Left colon (tissue), 2 donors: ENCODE measurements at regions of chr2 and their contacts with region 1.

Region 1: DNA sequence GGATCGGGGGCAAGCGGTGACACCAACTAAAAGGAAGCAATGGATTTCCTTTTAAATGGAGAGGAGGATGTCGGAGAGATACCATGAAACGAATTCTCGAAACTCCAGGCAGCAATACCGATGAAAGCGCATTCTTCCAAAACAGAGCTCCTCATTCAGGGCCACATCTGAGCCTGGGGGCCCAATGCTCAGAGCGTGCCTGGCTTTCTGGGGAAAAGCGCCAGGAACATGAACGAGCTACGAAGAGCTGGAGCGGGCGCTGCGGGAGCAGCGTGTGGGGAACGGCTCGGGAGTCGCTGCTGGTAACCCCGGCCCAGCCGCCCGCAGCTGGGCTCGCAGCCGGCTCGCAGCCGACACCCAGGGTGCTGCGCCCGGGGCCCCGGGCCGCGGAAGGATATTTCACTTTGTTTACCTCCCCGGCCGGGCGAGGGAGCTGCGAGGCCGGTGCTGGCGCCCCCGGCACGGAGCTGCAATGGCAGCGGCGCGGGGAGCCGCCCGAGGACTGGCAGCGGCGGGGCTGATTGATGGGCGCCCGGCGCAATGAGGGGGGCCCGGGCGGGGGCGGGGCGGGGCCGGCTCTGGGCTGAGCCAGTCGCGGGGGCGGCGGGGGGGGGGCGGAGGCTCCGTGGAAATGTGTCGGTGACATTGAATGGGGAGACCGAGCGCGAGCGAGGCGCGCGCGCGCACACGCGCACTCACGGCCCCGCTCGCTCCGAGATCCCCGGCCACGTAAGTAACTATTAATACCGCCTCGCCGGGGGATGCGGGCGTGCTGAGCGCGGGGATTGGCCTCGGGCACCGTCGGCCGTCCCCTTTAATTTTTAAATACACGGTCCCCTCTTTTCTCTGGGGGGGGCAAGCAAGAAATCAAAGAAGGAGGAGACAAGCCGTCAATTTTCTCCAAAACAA is at the start of gene TRIB2:
- DNase-seq: peak; percentile 67 to 82
- ATAC-seq: peak; percentile 80
- total RNA-seq, gene TRIB2: 3.4 to 7.8 TPM

Region 2: DNA sequence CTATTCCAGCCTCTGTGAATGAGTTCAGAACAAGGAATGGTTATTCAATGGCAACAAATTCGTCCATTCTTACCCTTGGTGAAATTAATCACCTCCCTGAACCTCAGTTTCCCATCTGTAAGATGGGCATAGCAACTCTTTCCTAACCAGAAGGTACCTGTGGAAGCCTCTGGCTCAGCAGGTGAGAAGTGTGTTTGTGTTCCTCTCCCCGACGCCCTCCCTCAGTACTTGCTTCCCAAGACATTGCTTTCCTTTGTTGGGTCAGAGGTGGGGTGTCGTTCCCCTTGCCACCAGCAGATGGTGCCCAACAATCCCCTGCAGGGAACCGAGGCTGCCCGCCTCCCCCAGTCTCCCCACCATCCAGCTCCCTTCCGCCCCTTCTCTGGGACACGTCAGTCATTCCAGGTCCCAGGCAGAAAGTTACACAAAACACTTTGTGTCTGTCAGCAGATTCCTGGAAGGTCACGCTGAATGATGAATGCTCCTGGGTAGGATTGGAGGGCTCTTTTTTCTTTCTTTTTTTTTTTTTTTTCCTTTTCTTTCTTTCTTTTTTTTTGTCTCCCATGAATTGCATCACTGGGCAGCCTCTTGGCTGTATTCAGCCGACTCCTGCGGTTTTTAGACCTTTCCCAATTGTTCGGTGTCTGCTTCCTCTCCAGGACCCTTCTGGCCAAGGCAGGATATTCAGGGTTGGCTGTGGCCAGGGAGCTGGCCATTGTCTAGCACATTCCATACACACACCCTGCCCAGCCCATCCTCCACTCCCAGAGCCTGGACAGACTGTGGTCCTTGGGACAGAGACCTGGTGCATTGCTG is 852.8 kb before region 1 on chr2:
- intact Hi-C with region 1: loop called in 1 of 2 experiments (anchors 10 kb)
- DNase-seq: peak; percentile 64 to 71
- ATAC-seq: peak; percentile 72

Region 3: DNA sequence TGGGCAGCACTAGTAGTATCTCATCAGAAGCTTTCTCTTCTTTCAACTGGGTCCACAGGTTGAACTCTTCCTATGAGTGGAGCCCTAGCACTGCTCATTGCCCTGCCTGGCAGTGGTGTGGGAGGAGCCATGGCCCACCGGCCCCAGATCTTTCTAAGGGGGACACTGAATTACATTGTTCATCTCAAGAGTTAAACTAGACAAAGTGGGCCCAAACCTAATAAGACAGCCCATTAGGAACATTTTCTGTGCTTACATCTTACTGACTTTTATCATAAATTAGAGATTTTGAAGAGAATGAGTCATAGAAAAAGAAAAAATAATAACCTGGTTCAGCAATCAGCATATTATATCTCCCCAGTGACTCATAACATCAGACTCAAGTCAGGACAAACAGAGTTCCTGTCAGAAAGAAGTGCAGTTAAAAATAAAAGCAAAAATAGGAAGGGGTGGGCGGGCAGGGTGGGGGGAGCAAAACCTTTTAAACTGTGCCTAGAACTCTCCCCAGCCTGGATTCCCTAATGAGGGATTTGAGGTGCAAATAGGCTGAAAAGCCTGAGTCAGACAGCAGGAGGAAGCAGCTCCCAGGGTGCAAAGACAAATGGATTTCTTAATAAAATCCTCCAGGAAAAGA is 161.4 kb before region 1 on chr2:
- intact Hi-C with region 1: loop called in 1 of 2 experiments (anchors 10 kb)
- DNase-seq: no peak
- ATAC-seq: no peak

Region 4: DNA sequence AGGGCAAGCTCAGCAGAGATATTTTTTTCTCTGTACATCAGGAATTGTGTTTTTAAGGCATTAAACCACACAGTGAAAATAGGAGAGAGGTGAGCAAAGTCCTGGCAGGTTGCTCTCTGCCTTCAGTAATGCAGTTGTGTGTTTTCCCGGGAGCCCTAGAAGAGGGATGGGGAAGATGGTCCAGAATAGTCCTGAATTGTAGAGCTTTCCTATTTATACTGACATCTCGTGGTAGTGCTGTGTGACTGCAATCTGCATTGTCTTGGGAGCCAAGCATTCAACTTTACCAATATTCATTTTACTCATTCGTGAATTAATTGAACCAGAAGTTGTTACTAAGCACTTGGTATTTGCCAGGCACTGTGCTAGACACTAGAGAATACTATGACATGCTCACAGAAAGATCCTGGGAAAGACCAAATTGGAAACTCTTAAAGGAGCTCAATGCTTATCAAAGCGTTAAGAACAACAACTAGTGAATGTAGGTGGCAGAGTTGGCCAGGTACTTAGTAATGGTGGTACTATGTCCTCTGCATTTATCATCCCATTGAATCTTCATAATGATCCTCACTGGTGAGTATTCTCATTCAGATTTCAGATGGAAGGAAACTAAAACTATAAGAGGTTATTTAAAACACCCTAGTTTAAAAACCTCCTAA is 214.8 kb after region 1 on chr2:
- intact Hi-C with region 1: loop called in 1 of 2 experiments (anchors 5 kb)
- DNase-seq: no peak
- ATAC-seq: peak; percentile 36